ENCODE measurements at regions of chr11 and their contacts with region 1.

Region 1: GRCh38 chr11:33687733-33688479 is 12.7 kb downstream of the C11orf91 start:
- DNase-seq: peak; percentile 82
- ATAC-seq: no peak
- H3K4me3 ChIP-seq: no peak overlapping the region
- H3K27ac ChIP-seq: peak overlapping the region; percentile 100
- H3K4me1 ChIP-seq: peaks cover 51% of the 10 kb centered on the region
- H3K27me3 ChIP-seq: no peaks in the 10 kb centered on the region
- CTCF ChIP-seq: peak; percentile 97

Region 2: GRCh38 chr11:33362051-33362910 is 325.6 kb before region 1 on chr11:
- CTCF ChIA-PET with region 1: interaction called, 11 read pairs
- POLR2A ChIA-PET with region 1: no interaction called
- intact Hi-C with region 1: loop called (anchors 1 kb)
- DNase-seq: peak; percentile 71
- ATAC-seq: peak; percentile 53
- H3K4me3 ChIP-seq: no peak overlapping the region
- H3K27ac ChIP-seq: no peak overlapping the region
- H3K4me1 ChIP-seq: no peaks in the 10 kb centered on the region
- H3K27me3 ChIP-seq: no peaks in the 10 kb centered on the region
- CTCF ChIP-seq: peak; percentile 76

Region 3: GRCh38 chr11:33557201-33557600 is 130.7 kb before region 1 on chr11:
- CTCF ChIA-PET with region 1: no interaction called
- POLR2A ChIA-PET with region 1: no interaction called
- intact Hi-C with region 1: no loop called
- DNase-seq: peak; percentile 87
- ATAC-seq: peak; percentile 96
- H3K4me3 ChIP-seq: no peak overlapping the region
- H3K27ac ChIP-seq: peak overlapping the region; percentile 89
- H3K4me1 ChIP-seq: peaks cover 24% of the 10 kb centered on the region
- H3K27me3 ChIP-seq: no peaks in the 10 kb centered on the region
- CTCF ChIP-seq: no peak

Region 4: GRCh38 chr11:33613404-33613803 is 74.5 kb before region 1 on chr11:
- CTCF ChIA-PET with region 1: no interaction called
- POLR2A ChIA-PET with region 1: no interaction called
- intact Hi-C with region 1: no loop called
- DNase-seq: no peak
- ATAC-seq: no peak
- H3K4me3 ChIP-seq: no peak overlapping the region
- H3K27ac ChIP-seq: no peak overlapping the region
- H3K4me1 ChIP-seq: peaks cover 4% of the 10 kb centered on the region; the same call in 1 of the 2 replicates
- H3K27me3 ChIP-seq: no peaks in the 10 kb centered on the region
- CTCF ChIP-seq: no peak

Region 5: DNA sequence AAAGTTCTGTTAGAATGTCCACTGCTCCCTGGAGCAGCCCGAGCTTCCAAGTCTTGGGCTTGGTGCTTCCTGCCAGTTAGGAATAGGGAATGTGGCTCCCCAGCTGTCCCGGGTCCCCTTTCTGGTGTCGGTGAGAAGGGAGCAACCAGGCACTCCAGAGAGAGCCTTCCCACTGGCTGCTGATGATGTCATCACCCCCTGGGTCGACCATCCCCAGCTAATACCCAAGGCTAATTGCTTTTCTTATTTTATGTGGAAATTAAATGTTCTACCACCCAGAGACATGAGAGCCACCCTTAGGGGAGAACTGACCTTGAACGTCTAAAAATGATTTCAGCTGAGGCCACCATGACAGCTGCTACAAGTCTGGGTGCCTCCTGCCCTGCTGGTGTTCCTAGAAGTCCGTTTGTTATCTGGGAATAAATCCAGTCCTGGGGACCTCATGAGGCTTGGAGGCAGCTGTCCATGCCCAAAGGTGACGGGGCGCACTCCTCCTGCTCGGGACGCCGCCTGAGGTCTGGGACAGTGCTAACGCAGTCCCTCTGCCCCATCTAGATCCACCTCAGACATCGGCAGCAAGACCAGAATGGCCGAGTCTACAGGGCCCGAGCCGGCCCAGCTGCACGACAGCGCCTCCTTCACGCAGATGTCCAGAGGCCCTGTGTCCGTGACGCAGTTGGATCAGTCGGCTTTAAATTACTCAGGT is 29.6 kb before region 1 on chr11:
- CTCF ChIA-PET with region 1: no interaction called
- POLR2A ChIA-PET with region 1: no interaction called
- intact Hi-C with region 1: no loop called
- DNase-seq: no peak
- ATAC-seq: no peak
- H3K4me3 ChIP-seq: no peak overlapping the region
- H3K27ac ChIP-seq: no peak overlapping the region
- H3K4me1 ChIP-seq: no peaks in the 10 kb centered on the region
- H3K27me3 ChIP-seq: no peaks in the 10 kb centered on the region
- CTCF ChIP-seq: no peak

Region 6: DNA sequence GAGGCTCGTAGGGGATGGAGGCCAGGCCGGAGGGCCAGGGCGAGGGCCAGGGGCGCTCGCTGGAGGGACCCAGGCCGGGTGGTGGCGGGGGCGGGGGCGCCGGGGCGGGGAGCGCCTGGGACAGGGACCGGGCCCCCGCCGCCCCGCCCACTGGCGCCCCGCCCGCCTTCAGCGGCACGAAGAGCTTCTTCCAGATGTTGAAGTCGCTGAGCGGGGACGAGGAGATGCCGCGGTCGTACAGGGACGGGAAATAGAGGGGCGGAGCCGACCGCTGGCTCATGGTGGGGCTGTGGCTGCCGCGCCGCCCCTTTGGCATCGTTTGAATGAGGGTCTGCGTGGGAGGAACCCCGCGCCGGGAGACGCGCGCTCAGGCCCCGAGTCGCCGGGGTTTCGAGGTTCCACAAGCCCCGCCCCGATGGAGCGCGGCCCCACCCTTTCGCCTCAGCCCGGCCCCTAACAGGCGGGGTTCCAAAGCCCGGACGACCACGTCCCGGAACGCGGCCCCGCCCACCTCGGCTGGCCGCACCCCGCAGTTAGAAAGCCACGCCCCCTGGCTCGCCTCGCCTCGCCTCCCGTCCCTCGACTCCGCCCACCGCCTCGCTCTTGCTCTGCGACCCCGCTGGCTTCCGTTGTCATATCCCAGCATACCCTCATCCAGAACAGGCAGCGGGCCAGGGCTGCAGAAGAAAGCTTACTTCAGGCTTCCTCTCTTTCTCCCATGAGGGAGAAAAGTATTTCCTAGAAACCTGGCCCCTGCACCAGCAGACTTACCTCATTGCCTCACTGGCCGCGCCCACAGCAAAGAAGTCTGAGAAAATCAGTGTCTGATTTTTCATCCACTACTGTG is 12.7 kb after region 1 on chr11 and contains the start of gene C11orf91:
- CTCF ChIA-PET with region 1: interaction called, 7 read pairs
- POLR2A ChIA-PET with region 1: interaction called, 45 read pairs
- intact Hi-C with region 1: loop called (anchors 1 kb)
- DNase-seq: peak; percentile 93
- ATAC-seq: peak; percentile 45
- H3K4me3 ChIP-seq: peak within 1 kb of the TSS; percentile 61
- H3K27ac ChIP-seq: peak within 1 kb of the TSS; percentile 99
- H3K4me1 ChIP-seq: peaks cover 67% of the 10 kb centered on the region
- H3K27me3 ChIP-seq: no peaks in the 10 kb centered on the region
- CTCF ChIP-seq: no peak
- total RNA-seq, gene C11orf91: 1.0 TPM in 1 of 2 replicates, not detected in the other

Region 7: DNA sequence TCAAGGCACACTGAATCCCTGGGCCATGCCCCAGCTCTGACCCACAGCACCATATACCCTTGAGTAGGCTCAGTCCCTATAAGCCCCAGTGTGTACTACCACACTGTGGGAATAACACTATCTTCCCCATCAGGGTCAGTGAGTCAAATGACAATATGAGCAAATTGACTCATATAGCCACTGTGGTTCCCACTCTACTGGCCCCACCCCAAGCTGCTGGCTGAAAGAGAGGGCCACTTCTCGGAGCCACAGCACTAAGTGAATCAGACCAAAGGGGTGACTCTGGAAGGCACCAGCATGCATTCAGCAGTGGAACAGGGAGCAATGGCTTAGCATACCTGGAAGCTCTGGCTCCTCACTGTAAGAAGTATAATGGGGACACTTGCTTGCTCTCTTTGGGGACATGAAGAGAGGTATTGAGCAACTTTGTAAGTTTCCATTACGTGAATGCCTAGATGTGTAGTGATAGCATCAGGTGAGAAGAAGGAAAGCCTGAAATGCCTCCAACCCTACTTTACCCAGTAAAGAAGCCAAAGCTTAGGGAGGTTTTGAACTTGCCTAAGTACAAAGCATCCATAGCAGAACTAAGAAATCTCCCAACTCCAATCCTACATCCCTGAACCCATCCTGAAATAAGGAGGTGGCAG is 34.8 kb after region 1 on chr11:
- CTCF ChIA-PET with region 1: no interaction called
- POLR2A ChIA-PET with region 1: no interaction called
- intact Hi-C with region 1: loop called (anchors 1 kb)
- DNase-seq: peak; percentile 86
- ATAC-seq: peak; percentile 49
- H3K4me3 ChIP-seq: peak overlapping the region; percentile 17; the same call in 1 of the 2 replicates
- H3K27ac ChIP-seq: peak overlapping the region; percentile 99
- H3K4me1 ChIP-seq: peaks cover 70% of the 10 kb centered on the region
- H3K27me3 ChIP-seq: no peaks in the 10 kb centered on the region
- CTCF ChIP-seq: no peak

Region 8: GRCh38 chr11:33808228-33808828 is 120.4 kb after region 1 on chr11:
- CTCF ChIA-PET with region 1: no interaction called
- POLR2A ChIA-PET with region 1: no interaction called
- intact Hi-C with region 1: loop called (anchors 10 kb)
- DNase-seq: peak; percentile 90
- ATAC-seq: peak; percentile 98
- H3K4me3 ChIP-seq: no peak overlapping the region
- H3K27ac ChIP-seq: no peak overlapping the region
- H3K4me1 ChIP-seq: peaks cover 12% of the 10 kb centered on the region; the same call in 1 of the 2 replicates
- H3K27me3 ChIP-seq: no peaks in the 10 kb centered on the region
- CTCF ChIP-seq: peak; percentile 86